Left lung (tissue), 14 donors: ENCODE measurements at regions of chr2 and their contacts with region 1.

Region 1: GRCh38 chr2:190088917-190089316 is 26.4 kb upstream of the MSTN start:
- DNase-seq: peak in 2 of 4 donors; percentile 58 to 73
- ATAC-seq: peak; percentile 87
- H3K4me3 ChIP-seq: no peak overlapping the region
- H3K27ac ChIP-seq: no peak overlapping the region
- H3K4me1 ChIP-seq: no peaks in the 10 kb centered on the region
- H3K27me3 ChIP-seq: no peaks in the 10 kb centered on the region
- CTCF ChIP-seq: peak; percentile 35 to 58

Region 2: GRCh38 chr2:189933911-189934399 is 155.0 kb before region 1 on chr2:
- intact Hi-C with region 1: no loop called
- DNase-seq: no peak
- ATAC-seq: no peak
- H3K4me3 ChIP-seq: no peak overlapping the region
- H3K27ac ChIP-seq: no peak overlapping the region
- H3K4me1 ChIP-seq: no peaks in the 10 kb centered on the region
- H3K27me3 ChIP-seq: no peaks in the 10 kb centered on the region
- CTCF ChIP-seq: no peak

Region 3: GRCh38 chr2:190179754-190180312 is 90.9 kb after region 1 on chr2:
- intact Hi-C with region 1: loop called in 1 of 2 experiments (anchors 10 kb)
- DNase-seq: no peak
- ATAC-seq: no peak
- H3K4me3 ChIP-seq: peak overlapping the region; percentile 52 to 56
- H3K27ac ChIP-seq: no peak overlapping the region
- H3K4me1 ChIP-seq: peaks cover 5 to 15% of the 10 kb centered on the region in 2 donors
- H3K27me3 ChIP-seq: peaks cover 0 to 16% of the 10 kb centered on the region in 2 donors
- CTCF ChIP-seq: peak in 1 of 2 donors; percentile 32

Region 4: GRCh38 chr2:190277234-190278112 is 188.6 kb after region 1 on chr2:
- intact Hi-C with region 1: loop called in 1 of 2 experiments (anchors 10 kb)
- DNase-seq: peak in 2 of 4 donors; percentile 30 to 44
- ATAC-seq: no peak
- H3K4me3 ChIP-seq: no peak overlapping the region
- H3K27ac ChIP-seq: no peak overlapping the region
- H3K4me1 ChIP-seq: no peaks in the 10 kb centered on the region
- H3K27me3 ChIP-seq: no peaks in the 10 kb centered on the region
- CTCF ChIP-seq: peak in 1 of 2 donors; percentile 40